Heart left ventricle (tissue), 16 donors: ENCODE measurements at regions of chr13 and their contacts with region 1.

Region 1: DNA sequence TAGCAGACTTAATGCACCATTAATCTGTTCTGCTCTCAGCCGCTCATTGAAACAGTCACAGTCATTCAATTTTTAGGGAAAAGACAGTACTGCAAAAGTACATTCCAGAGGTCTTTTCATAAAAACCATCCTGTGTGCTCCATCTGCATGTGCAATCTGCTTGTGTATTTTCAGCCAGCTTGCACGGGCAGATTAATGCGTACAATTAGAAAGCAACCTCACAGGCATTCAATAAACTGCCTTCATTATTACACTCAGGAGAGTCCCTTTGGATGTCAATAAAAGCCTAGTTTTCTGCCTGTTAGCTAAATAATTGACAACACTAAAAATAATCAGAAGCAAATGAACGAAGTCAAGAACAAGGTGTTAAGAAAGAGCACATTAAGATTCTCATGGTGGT is 41.9 kb downstream of the EPSTI1 start:
- DNase-seq: no peak
- ATAC-seq: no peak
- H3K4me3 ChIP-seq: no peak overlapping the region
- H3K27ac ChIP-seq: no peak overlapping the region
- H3K4me1 ChIP-seq: peaks cover 0 to 3% (median 0%) of the 10 kb centered on the region in 12 donors
- H3K27me3 ChIP-seq: no peaks in the 10 kb centered on the region
- CTCF ChIP-seq: no peak
- POLR2A ChIP-seq: no peak

Region 2: DNA sequence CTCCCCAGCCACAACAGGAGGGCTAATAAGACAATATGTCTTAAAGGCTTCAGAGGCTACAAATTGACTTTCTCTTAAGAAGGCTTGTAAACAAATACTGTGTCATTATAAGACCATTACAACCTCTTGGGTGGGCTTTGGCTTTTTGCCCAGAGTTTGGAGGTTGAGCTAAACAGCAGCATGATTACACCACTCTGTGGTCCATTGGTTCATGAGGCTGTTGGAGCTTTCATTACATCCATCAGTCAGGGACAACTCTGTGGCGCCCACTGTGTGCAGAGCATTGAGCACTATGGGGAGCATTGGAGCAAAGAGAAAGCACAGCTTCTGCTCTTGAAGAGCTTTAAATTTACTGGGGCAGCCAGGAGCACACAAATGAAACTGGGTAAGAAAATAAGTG is 300.4 kb before region 1 on chr13:
- intact Hi-C with region 1: loop called in 1 of 10 experiments (anchors 10 kb)
- DNase-seq: no peak
- ATAC-seq: no peak
- H3K4me3 ChIP-seq: no peak overlapping the region
- H3K27ac ChIP-seq: no peak overlapping the region
- H3K4me1 ChIP-seq: no peaks in the 10 kb centered on the region
- H3K27me3 ChIP-seq: peaks cover 0 to 17% (median 4%) of the 10 kb centered on the region in 9 donors
- CTCF ChIP-seq: no peak
- POLR2A ChIP-seq: no peak